Heart right ventricle (tissue), 16 donors: ENCODE measurements at regions of chr2 and their contacts with region 1.

Region 1: DNA sequence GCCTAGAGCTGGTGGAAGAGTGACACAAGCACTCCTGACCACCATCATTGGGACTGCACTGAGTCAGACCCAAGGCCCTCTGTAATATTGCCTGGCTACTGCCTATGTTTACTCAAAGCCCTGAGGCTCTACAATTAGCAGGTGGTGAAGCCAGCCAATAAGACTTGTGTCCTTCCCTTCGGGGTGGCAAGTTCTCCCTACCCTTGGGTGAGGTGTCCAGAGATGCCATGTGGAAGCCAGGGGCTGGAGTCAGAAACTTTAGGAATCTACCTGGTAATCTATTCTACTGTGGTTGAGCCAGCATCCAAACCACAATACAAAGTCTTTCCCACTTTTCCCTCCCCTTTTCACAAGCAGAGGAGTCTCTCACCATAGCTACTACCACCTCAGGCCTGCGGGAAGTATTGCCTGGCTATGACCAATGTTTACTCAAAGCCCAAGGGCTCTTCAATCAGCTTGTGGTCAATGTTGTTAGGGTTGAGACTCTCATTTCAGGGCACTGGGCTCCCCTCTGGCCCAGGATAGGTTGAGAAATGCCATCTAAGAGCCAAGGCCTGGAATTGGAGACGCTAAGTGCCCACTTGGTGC is 17.6 kb downstream of the DHRS9 start:
- DNase-seq: no peak
- ATAC-seq: peak in 1 of 8 donors; percentile 38
- H3K4me3 ChIP-seq: no peak overlapping the region
- H3K27ac ChIP-seq: no peak overlapping the region
- H3K4me1 ChIP-seq: peaks cover 0 to 45% (median 0%) of the 10 kb centered on the region in 9 donors
- H3K27me3 ChIP-seq: no peaks in the 10 kb centered on the region
- CTCF ChIP-seq: no peak

Region 2: GRCh38 chr2:169039702-169040101 is 47.3 kb before region 1 on chr2:
- intact Hi-C with region 1: no loop called
- DNase-seq: no peak
- ATAC-seq: no peak
- H3K4me3 ChIP-seq: no peak overlapping the region
- H3K27ac ChIP-seq: no peak overlapping the region
- H3K4me1 ChIP-seq: peaks cover 0 to 34% (median 0%) of the 10 kb centered on the region in 9 donors
- H3K27me3 ChIP-seq: no peaks in the 10 kb centered on the region
- CTCF ChIP-seq: no peak

Region 3: DNA sequence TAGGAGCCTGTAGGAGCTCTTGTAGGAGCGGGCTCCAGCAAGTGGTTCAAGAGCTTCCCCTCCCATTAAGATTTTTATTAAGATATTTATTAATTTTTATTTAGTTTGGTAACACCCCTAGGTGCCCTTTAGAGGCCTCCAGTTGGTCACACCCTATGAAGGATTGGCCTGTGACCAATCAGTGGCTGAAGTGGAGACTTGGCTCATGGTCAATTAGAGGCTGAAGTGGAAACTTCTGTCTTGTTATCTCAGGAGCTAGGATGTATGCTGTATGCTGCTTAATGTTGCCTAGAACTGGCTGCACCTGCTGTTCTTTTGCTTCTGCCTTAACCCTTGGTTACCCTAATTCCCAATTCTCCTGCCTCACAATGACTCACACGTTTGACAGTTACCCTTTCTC is 31.1 kb after region 1 on chr2:
- intact Hi-C with region 1: loop called in 1 of 10 experiments (anchors 1 kb)
- DNase-seq: peak in 1 of 2 donors; percentile 25
- ATAC-seq: peak in 6 of 8 donors; percentile 30 to 81 (median 76)
- H3K4me3 ChIP-seq: no peak overlapping the region
- H3K27ac ChIP-seq: no peak overlapping the region
- H3K4me1 ChIP-seq: peaks cover 0 to 36% (median 10%) of the 10 kb centered on the region in 9 donors
- H3K27me3 ChIP-seq: peaks cover 0 to 3% (median 0%) of the 10 kb centered on the region in 7 donors
- CTCF ChIP-seq: no peak